ENCODE measurements at regions of chr16 and their contacts with region 1.

Region 1: DNA sequence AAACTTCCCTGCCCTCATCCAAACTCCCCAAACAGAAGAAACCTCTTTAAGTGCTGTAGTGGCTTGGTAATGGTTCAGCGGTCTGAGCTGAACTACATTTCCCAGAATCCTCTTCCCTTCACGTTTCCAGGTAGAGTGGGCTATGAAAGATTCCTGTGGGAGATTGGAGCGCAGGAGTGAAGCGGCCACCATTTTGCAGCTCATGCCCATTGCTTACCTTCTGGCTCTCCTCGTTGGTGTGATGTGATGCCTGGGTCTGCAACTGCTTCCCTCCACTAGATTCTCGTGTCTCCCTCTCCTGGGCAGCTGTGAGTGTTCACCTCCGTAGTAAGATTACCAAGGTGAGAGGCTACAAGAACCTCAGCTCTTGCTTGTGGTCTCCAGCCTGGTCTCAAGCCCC is 82.1 kb downstream of the GPR139 start:
- DNase-seq: no peak
- ATAC-seq: no peak
- H3K4me3 ChIP-seq: no peak overlapping the region
- H3K27ac ChIP-seq: no peak overlapping the region
- H3K4me1 ChIP-seq: no peaks in the 10 kb centered on the region
- H3K27me3 ChIP-seq: peaks cover 0 to 13% (median 0%) of the 10 kb centered on the region in 9 donors
- CTCF ChIP-seq: no peak
- POLR2A ChIP-seq: no peak

Region 2: GRCh38 chr16:20049845-20050244 is 58.2 kb after region 1 on chr16:
- intact Hi-C with region 1: loop called in 1 of 10 experiments (anchors 10 kb)
- DNase-seq: no peak
- ATAC-seq: no peak
- H3K4me3 ChIP-seq: no peak overlapping the region
- H3K27ac ChIP-seq: no peak overlapping the region
- H3K4me1 ChIP-seq: no peaks in the 10 kb centered on the region
- H3K27me3 ChIP-seq: peaks cover 0 to 9% (median 0%) of the 10 kb centered on the region in 9 donors
- CTCF ChIP-seq: no peak
- POLR2A ChIP-seq: no peak